Activated T-helper 1 cell treated with anti-CD3 and anti-CD28 coated beads, Interleukin-12 subunit alpha, Interleukin-12 subunit beta, Interleukin-2, Interleukin-4 antibody, amounts not matched to agents 30 ng/mL and 10 ng/mL and 1 ng/mL, durations not matched to agents 14 hours and 24 hours and 36 hours (primary cell): ENCODE measurements at regions of chr4 and their contacts with region 1.

Region 1: DNA sequence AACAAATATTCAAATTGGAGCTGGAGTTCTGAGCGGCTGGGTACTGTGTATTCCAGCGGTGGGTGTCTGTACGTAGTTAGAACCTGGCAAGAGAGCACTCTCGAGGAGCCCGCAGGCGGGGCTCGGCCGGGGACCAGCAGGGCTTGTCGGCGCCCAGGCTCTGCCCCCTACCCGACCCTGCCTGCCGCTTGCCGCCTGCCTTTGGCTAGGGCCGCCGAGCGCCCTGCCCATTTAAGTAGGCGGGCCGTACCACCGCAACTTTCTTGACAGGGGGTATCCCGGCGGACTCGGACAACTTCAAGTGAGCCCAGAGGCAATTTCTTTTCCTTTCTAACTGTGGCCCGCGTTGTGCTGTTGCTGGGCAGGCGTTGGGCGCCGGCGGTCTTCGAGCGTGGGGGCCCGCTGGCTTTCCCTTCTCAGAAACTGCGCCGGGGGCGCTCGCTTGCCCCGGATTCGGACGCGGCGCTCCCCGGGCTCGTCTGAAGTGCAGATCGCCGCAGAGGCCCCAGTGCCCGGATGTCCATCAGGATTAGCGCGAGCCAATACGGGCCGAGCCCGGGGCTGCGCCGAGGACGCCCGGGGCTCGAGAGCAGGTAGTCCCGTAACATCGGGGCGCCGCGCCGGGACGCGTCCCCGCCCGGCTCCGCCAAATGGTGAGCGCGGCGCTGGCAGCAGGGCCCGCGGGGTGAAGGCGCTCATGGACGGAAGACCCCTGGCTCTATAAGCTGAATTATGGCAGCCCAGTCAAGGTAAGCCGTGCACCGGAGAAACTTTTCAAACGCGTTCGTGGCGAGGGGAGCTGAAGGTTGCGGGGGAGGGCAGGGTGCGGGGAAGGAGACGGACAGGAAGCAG is 72.1 kb downstream of the AFF1 start:
- DNase-seq: peak; percentile 87
- H3K4me3 Mint-ChIP-seq: peak overlapping the region; percentile 98
- H3K27ac Mint-ChIP-seq: peak overlapping the region; percentile 96
- H3K4me1 Mint-ChIP-seq: peaks cover 52% of the 10 kb centered on the region
- H3K27me3 Mint-ChIP-seq: no peaks in the 10 kb centered on the region

Region 2: GRCh38 chr4:86508436-86508835 is 498.5 kb before region 1 on chr4:
- intact Hi-C with region 1: no loop called
- DNase-seq: no peak
- H3K4me3 Mint-ChIP-seq: no peak overlapping the region
- H3K27ac Mint-ChIP-seq: no peak overlapping the region
- H3K4me1 Mint-ChIP-seq: no peaks in the 10 kb centered on the region
- H3K27me3 Mint-ChIP-seq: peaks cover 31% of the 10 kb centered on the region

Region 3: DNA sequence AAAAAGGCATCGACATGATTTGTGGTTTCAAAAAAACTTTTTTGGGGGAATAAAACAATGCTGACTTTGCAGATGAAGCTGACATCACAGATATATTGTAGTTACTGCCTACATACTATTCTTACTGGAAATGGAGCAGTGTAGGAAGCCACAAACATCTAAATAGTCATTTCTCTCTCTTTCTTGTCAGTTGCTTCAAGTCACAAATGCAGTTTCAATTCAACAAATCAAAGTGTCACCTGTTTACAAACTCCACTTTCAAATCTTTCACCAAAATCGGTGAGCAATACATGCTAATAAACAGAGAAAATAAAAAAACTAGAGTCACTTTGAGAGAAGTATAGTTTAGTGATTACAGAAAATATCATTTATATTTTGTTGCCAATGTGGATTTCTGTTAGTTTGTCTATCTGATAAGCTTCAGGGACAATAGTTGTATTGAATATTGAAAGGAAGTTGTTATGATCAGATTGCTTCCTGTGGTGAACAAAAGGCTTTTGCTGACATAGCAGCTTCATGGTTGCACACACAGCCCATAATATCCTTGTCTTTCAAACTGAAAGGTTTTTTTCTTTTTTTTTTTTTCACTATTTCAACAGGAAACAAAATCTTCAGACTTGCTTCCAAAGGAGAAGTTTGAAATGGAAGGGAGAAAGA is 462.5 kb before region 1 on chr4:
- intact Hi-C with region 1: loop called (anchors 2 kb)
- DNase-seq: peak; percentile 7
- H3K4me3 Mint-ChIP-seq: peak overlapping the region; percentile 75
- H3K27ac Mint-ChIP-seq: peak overlapping the region; percentile 96
- H3K4me1 Mint-ChIP-seq: peaks cover 39% of the 10 kb centered on the region
- H3K27me3 Mint-ChIP-seq: peaks cover 5% of the 10 kb centered on the region

Region 4: GRCh38 chr4:86957214-86957613 is 49.7 kb before region 1 on chr4:
- intact Hi-C with region 1: loop called (anchors 1 kb)
- DNase-seq: no peak
- H3K4me3 Mint-ChIP-seq: no peak overlapping the region
- H3K27ac Mint-ChIP-seq: peak overlapping the region; percentile 75
- H3K4me1 Mint-ChIP-seq: peaks cover 31% of the 10 kb centered on the region
- H3K27me3 Mint-ChIP-seq: no peaks in the 10 kb centered on the region

Region 5: DNA sequence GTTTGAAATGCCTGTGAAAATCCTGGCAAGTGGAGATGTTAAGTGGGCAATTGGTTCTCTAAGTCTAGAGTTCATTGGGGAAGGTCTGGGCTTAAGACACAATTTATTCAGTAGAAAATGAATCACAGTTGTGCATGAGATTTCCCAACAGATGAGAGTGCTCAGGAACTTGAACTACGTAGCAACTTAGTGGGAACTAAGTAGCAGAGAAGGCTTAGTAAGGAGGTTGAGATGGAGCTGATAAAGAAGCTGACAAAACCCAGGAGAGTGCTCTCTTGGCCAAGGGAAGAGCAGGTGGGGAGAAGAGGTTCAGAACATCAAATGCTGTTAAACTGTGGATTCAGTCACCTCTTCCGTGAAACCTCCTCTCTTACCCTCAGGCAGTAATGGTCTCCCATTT is 39.1 kb before region 1 on chr4:
- intact Hi-C with region 1: no loop called
- DNase-seq: no peak
- H3K4me3 Mint-ChIP-seq: no peak overlapping the region
- H3K27ac Mint-ChIP-seq: no peak overlapping the region
- H3K4me1 Mint-ChIP-seq: peaks cover 12% of the 10 kb centered on the region
- H3K27me3 Mint-ChIP-seq: no peaks in the 10 kb centered on the region

Region 6: GRCh38 chr4:87058356-87059073 is 51.6 kb after region 1 on chr4:
- intact Hi-C with region 1: loop called (anchors 1 kb)
- DNase-seq: no peak
- H3K4me3 Mint-ChIP-seq: peak overlapping the region; percentile 3
- H3K27ac Mint-ChIP-seq: peak overlapping the region; percentile 82
- H3K4me1 Mint-ChIP-seq: peaks cover 65% of the 10 kb centered on the region
- H3K27me3 Mint-ChIP-seq: no peaks in the 10 kb centered on the region

Region 7: DNA sequence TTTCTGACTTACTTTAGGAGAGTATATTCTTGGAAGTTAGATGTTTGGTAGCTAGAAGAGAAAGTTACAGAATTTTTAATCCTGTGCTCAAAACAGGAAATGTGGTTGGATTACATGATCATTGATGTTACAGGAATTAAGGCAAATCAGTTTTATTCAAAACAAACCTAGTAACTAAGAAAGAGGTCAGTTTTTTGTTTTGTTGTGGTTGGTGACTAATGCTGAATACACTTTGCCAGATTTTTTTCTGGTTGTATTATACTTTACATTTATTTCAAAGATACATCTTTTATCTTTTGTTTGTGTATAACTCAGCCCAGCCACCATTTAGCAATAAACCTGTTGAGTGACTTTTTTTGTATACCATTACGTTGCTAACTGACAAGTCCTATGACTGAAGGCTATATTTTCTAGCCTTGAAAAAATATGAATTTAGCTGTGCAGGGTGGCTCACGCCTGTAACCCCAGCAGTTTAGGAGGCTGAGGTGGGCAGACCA is 96.8 kb after region 1 on chr4:
- intact Hi-C with region 1: loop called (anchors 1 kb)
- DNase-seq: no peak
- H3K4me3 Mint-ChIP-seq: peak overlapping the region; percentile 19
- H3K27ac Mint-ChIP-seq: peak overlapping the region; percentile 29
- H3K4me1 Mint-ChIP-seq: peaks cover 19% of the 10 kb centered on the region
- H3K27me3 Mint-ChIP-seq: no peaks in the 10 kb centered on the region

Region 8: GRCh38 chr4:88007304-88008121 is 1000.6 kb after region 1 on chr4 and contains the start of gene PKD2:
- intact Hi-C with region 1: loop called (anchors 10 kb)
- DNase-seq: peak; percentile 79
- H3K4me3 Mint-ChIP-seq: peak within 1 kb of the TSS; percentile 89
- H3K27ac Mint-ChIP-seq: peak within 1 kb of the TSS; percentile 80
- H3K4me1 Mint-ChIP-seq: peaks cover 41% of the 10 kb centered on the region
- H3K27me3 Mint-ChIP-seq: peaks cover 20% of the 10 kb centered on the region
- total RNA-seq, gene PKD2: 10.1 and 11.7 TPM in 2 replicates